HepG2 (cell line): ENCODE measurements at regions of chr4 and their contacts with region 1.

Region 1: GRCh38 chr4:124262211-124263179 is 450.0 kb downstream of the ANKRD50 start:
- DNase-seq: peak; percentile 53
- ATAC-seq: peak; percentile 91
- H3K4me3 ChIP-seq: no peak overlapping the region
- H3K27ac ChIP-seq: no peak overlapping the region
- H3K4me1 ChIP-seq: no peaks in the 10 kb centered on the region
- H3K27me3 ChIP-seq: no peaks in the 10 kb centered on the region
- CTCF ChIP-seq: peak; percentile 79
- EP300 ChIP-seq: no peak
- POLR2A ChIP-seq: no peak
- RAD21 ChIP-seq: peak; percentile 59

Region 2: DNA sequence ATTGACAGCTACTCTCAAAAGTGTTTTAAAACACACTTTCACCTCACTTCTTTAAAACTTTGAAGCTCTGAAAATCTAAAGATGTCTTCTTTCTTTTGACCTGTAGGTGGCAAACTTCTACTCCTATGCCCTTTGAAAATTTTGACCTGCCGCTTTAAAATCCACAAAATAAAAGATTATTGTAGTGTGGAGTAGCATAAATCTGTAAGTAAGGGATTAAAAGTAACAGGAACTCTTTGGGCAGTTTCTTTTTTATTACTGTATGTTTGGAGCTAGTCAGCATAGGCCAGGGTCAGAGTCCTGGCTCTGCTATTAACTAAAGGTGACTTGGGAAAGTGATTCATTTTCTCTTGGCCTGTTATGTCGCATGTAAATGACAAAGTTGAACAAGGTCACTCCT is 1504.5 kb before region 1 on chr4:
- CTCF ChIA-PET with region 1: no interaction called
- POLR2A ChIA-PET with region 1: no interaction called
- in situ Hi-C with region 1: no loop called
- intact Hi-C with region 1: loop called (anchors 5 kb)
- DNase-seq: no peak
- ATAC-seq: peak; percentile 35; the same call in 1 of the 3 replicates
- H3K4me3 ChIP-seq: peak overlapping the region in 1 of 3 experiments; percentile 27; a peak in 1 of 6 replicates
- H3K27ac ChIP-seq: no peak overlapping the region
- H3K4me1 ChIP-seq: peaks cover 16% of the 10 kb centered on the region
- H3K27me3 ChIP-seq: no peaks in the 10 kb centered on the region
- CTCF ChIP-seq: peak; percentile 61
- EP300 ChIP-seq: no peak
- POLR2A ChIP-seq: no peak
- RAD21 ChIP-seq: 0 out of 2 replicates have a peak, but pooled peaks have one; percentile 23

Region 3: DNA sequence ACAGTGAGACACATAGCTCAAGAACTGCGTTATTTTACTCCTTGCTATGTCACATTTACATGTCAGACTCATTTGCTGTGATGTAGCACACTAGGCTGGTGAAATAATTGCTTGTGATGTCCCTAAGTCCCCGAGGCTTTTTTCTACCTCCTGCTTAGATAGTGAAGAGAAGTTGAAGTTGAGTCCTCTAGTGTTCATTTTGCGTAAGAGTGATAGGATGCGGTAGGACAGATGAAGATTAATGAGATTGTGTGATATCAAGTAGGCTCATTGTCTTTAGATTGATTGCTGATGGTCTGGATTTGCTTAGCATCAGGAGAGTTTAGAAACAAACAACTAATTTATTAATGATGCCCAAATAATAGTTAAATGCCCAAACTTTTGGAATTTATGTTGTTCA is 1166.5 kb before region 1 on chr4:
- CTCF ChIA-PET with region 1: no interaction called
- POLR2A ChIA-PET with region 1: no interaction called
- in situ Hi-C with region 1: loop called (anchors 10 kb)
- intact Hi-C with region 1: loop called (anchors 5 kb)
- DNase-seq: peak; percentile 15
- ATAC-seq: no peak
- H3K4me3 ChIP-seq: no peak overlapping the region
- H3K27ac ChIP-seq: no peak overlapping the region
- H3K4me1 ChIP-seq: no peaks in the 10 kb centered on the region
- H3K27me3 ChIP-seq: no peaks in the 10 kb centered on the region
- CTCF ChIP-seq: peak; percentile 45
- EP300 ChIP-seq: no peak
- POLR2A ChIP-seq: no peak
- RAD21 ChIP-seq: no peak

Region 4: GRCh38 chr4:123350191-123350544 is 912.3 kb before region 1 on chr4:
- CTCF ChIA-PET with region 1: no interaction called
- POLR2A ChIA-PET with region 1: no interaction called
- in situ Hi-C with region 1: no loop called
- intact Hi-C with region 1: loop called (anchors 10 kb)
- DNase-seq: peak; percentile 81
- ATAC-seq: peak; percentile 91
- H3K4me3 ChIP-seq: peak overlapping the region in 1 of 3 experiments; percentile 15; a peak in 1 of 6 replicates
- H3K27ac ChIP-seq: no peak overlapping the region
- H3K4me1 ChIP-seq: peaks cover 48% of the 10 kb centered on the region
- H3K27me3 ChIP-seq: no peaks in the 10 kb centered on the region
- CTCF ChIP-seq: peak; percentile 78
- EP300 ChIP-seq: 0 out of 4 replicates have a peak, but pooled peaks of 1 of the 2 experiments have one; percentile 33
- POLR2A ChIP-seq: no peak
- RAD21 ChIP-seq: peak; percentile 47

Region 5: GRCh38 chr4:123776254-123776653 is 486.2 kb before region 1 on chr4:
- CTCF ChIA-PET with region 1: interaction called, 4 read pairs
- POLR2A ChIA-PET with region 1: no interaction called
- in situ Hi-C with region 1: loop called (anchors 25 kb)
- intact Hi-C with region 1: loop called (anchors 2 kb)
- DNase-seq: no peak
- ATAC-seq: no peak
- H3K4me3 ChIP-seq: no peak overlapping the region
- H3K27ac ChIP-seq: no peak overlapping the region
- H3K4me1 ChIP-seq: no peaks in the 10 kb centered on the region
- H3K27me3 ChIP-seq: no peaks in the 10 kb centered on the region
- CTCF ChIP-seq: no peak
- EP300 ChIP-seq: no peak
- POLR2A ChIP-seq: no peak
- RAD21 ChIP-seq: no peak

Region 6: GRCh38 chr4:124121461-124121934 is 141.0 kb before region 1 on chr4:
- CTCF ChIA-PET with region 1: no interaction called
- POLR2A ChIA-PET with region 1: no interaction called
- in situ Hi-C with region 1: no loop called
- intact Hi-C with region 1: loop called (anchors 5 kb)
- DNase-seq: peak; percentile 11
- ATAC-seq: no peak
- H3K4me3 ChIP-seq: no peak overlapping the region
- H3K27ac ChIP-seq: no peak overlapping the region
- H3K4me1 ChIP-seq: no peaks in the 10 kb centered on the region
- H3K27me3 ChIP-seq: no peaks in the 10 kb centered on the region
- CTCF ChIP-seq: no peak
- EP300 ChIP-seq: no peak
- POLR2A ChIP-seq: no peak
- RAD21 ChIP-seq: no peak